ENCODE measurements at regions of chr14 and their contacts with region 1.

Region 1: GRCh38 chr14:105300792-105301533 is at the start of gene BRF1:
- DNase-seq: peak; percentile 98 to 100
- ATAC-seq: peak; percentile 95 to 98 (median 96)
- H3K4me3 ChIP-seq: peak within 1 kb of the TSS; percentile 72 to 93 (median 86)
- H3K27ac ChIP-seq: peak within 1 kb of the TSS; percentile 89 to 99 (median 94)
- H3K4me1 ChIP-seq: peaks cover 8 to 35% (median 22%) of the 10 kb centered on the region in 9 donors
- H3K27me3 ChIP-seq: no peaks in the 10 kb centered on the region
- CTCF ChIP-seq: no peak
- total RNA-seq, gene BRF1: 12.7 to 18.9 (median 16.2) TPM

Region 2: GRCh38 chr14:105314287-105315200 is 13.6 kb after region 1 on chr14 and contains the start of gene PACS2:
- intact Hi-C with region 1: loop called in 2 of 10 experiments (anchors 2 kb)
- DNase-seq: peak; percentile 64 to 84
- ATAC-seq: peak; percentile 82 to 93 (median 88)
- H3K4me3 ChIP-seq: peak within 1 kb of the TSS; percentile 60 to 99 (median 78)
- H3K27ac ChIP-seq: peak within 1 kb of the TSS; percentile 78 to 96 (median 94)
- H3K4me1 ChIP-seq: peaks cover 9 to 43% (median 35%) of the 10 kb centered on the region in 9 donors
- H3K27me3 ChIP-seq: no peaks in the 10 kb centered on the region
- CTCF ChIP-seq: no peak
- total RNA-seq, gene PACS2: 41.8 to 78.9 (median 54.6) TPM

Measured in heart right ventricle (tissue), 16 donors.